ENCODE measurements at regions of chr5 and their contacts with region 1.

Region 1: GRCh38 chr5:59660737-59661136 is 232.8 kb downstream of the PDE4D start:
- DNase-seq: no peak
- H3K4me3 ChIP-seq: no peak overlapping the region
- H3K27me3 ChIP-seq: no peaks in the 10 kb centered on the region
- CTCF ChIP-seq: peak; percentile 38; the same call in 1 of the 2 replicates

Region 2: GRCh38 chr5:59506285-59506877 is 154.4 kb before region 1 on chr5:
- CTCF ChIA-PET with region 1: interaction called, 40 read pairs
- POLR2A ChIA-PET with region 1: no interaction called
- DNase-seq: no peak
- H3K4me3 ChIP-seq: no peak overlapping the region
- H3K27me3 ChIP-seq: no peaks in the 10 kb centered on the region
- CTCF ChIP-seq: peak; percentile 26; the same call in 1 of the 2 replicates

Region 3: DNA sequence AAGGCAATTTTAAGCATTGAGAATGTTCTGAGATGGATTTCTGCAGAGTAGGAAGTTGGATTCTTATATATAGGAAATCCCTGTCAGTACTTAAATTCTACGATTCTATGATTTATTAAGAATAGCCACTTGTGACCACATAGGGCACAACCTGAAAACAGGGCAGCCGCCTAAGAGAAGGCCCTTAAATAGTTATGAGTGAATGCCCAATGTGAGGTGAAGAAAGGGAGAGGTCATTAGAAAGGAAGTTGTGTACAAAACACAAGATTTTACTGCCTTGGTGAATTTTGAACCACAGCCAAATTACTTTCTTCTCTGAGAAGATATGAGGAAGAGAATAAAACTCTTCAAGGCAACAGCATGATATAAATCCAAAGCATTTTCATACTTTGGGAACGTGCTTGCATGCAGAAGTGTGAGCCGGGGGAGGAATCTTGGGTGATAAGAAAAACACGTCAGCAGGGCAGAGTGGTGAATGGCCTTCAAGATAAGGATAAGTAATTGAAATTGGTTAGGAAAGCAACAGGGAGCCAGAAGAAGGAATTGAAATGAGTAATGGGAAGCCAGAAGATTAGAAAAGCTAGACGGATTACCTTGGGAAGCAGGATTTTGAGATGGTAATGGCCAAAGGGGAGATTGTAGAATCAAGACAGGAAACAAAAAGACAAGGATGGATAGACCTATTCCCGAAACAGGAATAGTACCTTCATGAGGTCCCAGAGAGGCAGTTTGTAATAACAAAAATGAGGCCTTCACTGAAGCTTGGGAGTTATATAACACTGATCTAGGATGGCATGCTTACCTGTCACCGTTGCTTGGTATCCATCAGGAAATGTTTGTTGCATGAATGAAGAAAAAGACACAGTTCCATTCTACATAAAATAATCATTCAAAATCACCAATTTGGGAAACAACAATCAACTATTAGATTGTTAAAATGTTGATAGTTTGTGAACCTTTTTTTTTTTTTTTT is 11.5 kb before region 1 on chr5:
- CTCF ChIA-PET with region 1: no interaction called
- POLR2A ChIA-PET with region 1: no interaction called
- DNase-seq: no peak
- H3K4me3 ChIP-seq: no peak overlapping the region
- H3K27me3 ChIP-seq: no peaks in the 10 kb centered on the region
- CTCF ChIP-seq: no peak